ENCODE measurements at regions of chr16 and their contacts with region 1.

Region 1: DNA sequence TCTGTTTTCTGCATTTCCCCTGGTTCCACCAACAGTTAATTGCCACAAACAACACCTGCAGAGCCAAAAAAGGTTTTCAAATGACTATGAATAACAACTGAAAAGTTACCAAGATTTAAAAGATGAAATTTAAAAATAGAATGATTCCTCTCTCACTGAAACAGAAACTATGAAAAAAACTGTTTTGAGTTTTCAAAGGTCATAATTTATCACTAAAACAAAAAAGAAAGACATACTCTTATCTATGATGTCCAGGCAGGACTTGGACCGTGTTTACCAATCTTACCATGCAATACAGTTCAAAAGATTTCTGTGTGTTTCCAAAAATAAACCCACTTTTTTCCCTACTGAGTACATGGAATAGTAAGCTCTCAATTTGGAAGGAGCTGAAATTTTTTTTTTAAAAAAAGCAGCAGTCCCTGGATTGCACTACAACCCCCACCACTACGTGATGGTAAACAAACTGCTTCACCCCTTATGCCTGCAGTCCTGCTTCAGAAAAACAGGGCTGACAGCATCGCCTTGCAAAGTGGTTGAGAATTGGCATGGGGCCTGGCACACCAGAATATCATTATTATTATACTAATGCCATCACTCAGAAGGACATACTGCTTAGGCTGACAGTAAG is 8.5 kb downstream of the TXNDC11 start:
- DNase-seq: peak in 1 of 6 donors; percentile 33
- ATAC-seq: peak in 3 of 4 donors; percentile 28 to 51 (median 42)
- H3K4me3 ChIP-seq: no peak overlapping the region
- H3K27ac ChIP-seq: peak overlapping the region in 2 of 4 donors; percentile 30 to 58
- H3K4me1 ChIP-seq: peaks cover 57 to 69% (median 66%) of the 10 kb centered on the region in 3 donors
- H3K27me3 ChIP-seq: no peaks in the 10 kb centered on the region
- CTCF ChIP-seq: no peak

Region 2: GRCh38 chr16:11783319-11784037 is 49.3 kb after region 1 on chr16:
- intact Hi-C with region 1: no loop called
- DNase-seq: no peak
- ATAC-seq: peak; percentile 33 to 61 (median 52)
- H3K4me3 ChIP-seq: no peak overlapping the region
- H3K27ac ChIP-seq: peak overlapping the region; percentile 54 to 87 (median 82)
- H3K4me1 ChIP-seq: peaks cover 4 to 28% (median 27%) of the 10 kb centered on the region in 3 donors
- H3K27me3 ChIP-seq: no peaks in the 10 kb centered on the region
- CTCF ChIP-seq: no peak

Region 3: DNA sequence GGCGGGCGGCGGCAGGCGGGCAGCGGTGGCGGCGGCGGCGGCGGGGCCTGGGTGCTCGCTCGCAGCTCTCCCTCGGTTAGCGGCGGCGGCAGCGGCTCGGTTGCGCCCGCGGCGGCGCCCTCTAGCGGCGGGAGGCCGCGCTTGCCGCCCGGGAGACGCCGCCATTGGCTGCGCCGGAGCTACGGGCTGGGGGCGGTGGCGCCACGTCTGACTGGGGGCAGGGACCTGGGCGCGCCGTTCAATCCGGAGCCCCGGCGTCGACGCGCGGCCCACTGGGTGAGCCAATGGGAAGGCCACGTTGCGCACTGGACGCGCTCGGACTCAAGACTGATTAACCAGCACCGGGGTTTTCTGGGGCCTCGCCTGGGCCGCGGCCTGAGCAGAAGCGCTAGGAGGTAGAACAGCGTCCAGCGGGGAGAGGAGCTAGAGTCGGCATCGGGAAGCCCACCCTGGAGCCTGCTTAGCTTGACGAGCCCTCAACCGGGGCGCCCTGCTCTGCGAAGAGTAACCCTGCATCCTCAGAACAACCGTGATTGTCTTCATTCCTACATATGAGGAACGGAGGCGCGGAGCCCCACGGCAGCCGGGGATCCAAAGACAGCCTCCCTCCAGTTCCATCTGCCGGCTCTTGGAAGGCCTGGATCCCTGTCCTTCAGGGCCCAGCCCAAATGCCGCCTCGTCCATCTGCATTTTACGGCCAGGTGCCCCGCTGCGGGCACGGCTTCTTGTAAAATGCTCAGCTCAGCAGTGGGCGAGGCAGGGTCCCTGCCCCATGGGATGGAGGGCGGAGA is 63.2 kb after region 1 on chr16 and contains the start of gene ZC3H7A:
- intact Hi-C with region 1: loop called in 2 of 3 experiments (anchors 10 kb)
- DNase-seq: peak; percentile 97 to 99 (median 97)
- ATAC-seq: peak; percentile 93 to 97 (median 96)
- H3K4me3 ChIP-seq: peak within 1 kb of the TSS; percentile 67 to 92 (median 84)
- H3K27ac ChIP-seq: peak within 1 kb of the TSS; percentile 92 to 97 (median 95)
- H3K4me1 ChIP-seq: peaks cover 20 to 49% (median 42%) of the 10 kb centered on the region in 3 donors
- H3K27me3 ChIP-seq: no peaks in the 10 kb centered on the region
- CTCF ChIP-seq: peak; percentile 73 to 87 (median 84)
- total RNA-seq, gene ZC3H7A: 23.8 to 34.5 (median 30.2) TPM